ENCODE measurements at regions of chr1 and their contacts with region 1.

Region 1: DNA sequence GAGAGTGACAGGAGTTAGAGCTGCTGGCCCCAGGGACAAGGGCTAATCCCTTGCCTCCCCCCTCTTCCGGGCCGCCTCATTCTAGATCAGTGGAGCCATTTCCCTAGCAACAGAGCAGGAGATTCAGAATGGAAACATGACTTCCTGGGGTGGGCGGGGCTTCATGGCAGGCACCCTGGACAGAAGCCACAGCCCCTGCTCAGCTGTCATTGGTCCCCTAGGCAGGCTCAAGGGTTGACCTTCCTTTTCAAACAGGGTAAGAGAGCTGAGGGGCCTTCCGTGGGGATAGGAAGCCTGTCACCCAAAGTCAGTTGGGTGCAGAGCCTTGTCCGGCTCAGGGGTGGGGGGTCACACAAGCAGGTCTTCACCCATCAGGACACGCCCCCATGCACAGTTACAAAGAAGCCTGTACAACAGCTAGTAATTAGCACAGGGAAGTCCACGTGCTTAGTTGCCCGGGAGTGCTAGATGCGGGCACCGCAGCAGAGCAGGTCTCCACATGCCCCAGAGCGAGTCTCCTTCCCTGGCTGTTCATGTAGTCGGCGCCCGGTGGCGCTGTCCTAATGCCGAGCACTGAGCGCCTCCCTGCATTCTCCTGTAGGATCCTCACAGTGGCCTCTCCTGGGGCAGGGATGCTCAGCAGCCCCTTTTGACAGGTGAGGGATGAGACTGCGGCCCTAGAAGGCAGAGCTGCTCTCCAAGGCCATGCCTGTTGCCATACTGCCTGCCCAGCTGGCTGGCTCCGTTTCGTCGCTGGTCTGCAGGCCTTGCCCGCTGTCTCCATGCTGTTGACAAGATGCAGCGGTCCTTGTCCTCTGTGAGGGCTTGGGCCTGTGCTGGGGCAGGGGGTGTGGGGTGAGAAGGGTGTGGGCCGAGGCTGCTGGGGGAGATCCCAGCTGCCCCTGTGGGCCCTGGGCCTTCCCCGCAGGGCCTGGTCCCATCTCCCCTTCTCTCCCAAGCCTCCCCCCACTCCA is 5.1 kb downstream of the TMEM201 start:
- DNase-seq: peak; percentile 85
- CTCF ChIP-seq: no peak

Region 2: DNA sequence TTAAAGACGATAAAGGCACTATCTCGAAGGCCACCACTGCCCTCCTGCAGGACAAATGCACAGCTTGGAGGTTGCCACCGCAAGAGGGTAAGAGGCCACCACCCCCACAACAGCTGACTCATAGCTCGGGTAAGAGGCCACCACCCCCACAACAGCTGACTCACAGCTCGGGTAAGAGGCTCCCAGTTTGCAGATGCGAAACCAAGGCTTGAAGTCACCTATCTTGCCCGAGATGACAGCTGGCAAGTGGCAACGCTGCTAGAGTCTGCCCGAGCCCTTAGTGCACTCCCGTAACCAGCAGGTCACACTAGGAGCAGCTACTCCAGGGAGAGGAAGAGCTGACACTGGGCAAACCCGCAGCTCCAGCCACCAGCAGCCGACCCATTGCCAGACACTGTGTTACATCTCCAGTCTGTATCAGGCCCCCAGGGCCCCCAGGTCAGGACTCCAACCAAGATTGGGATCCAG is 318.2 kb before region 1 on chr1:
- CTCF ChIA-PET with region 1: no interaction called
- POLR2A ChIA-PET with region 1: no interaction called
- DNase-seq: peak; percentile 81
- CTCF ChIP-seq: no peak

Region 3: GRCh38 chr1:9615316-9616063 is 21.7 kb after region 1 on chr1:
- CTCF ChIA-PET with region 1: interaction called, 25 read pairs
- POLR2A ChIA-PET with region 1: no interaction called
- DNase-seq: peak; percentile 83
- CTCF ChIP-seq: peak; percentile 86

Region 4: GRCh38 chr1:9910425-9911178 is 316.8 kb after region 1 on chr1:
- CTCF ChIA-PET with region 1: no interaction called
- POLR2A ChIA-PET with region 1: no interaction called
- DNase-seq: peak; percentile 99
- CTCF ChIP-seq: no peak